Mammary epithelial cell (primary cell): ENCODE measurements at regions of chr4 and their contacts with region 1.

Region 1: DNA sequence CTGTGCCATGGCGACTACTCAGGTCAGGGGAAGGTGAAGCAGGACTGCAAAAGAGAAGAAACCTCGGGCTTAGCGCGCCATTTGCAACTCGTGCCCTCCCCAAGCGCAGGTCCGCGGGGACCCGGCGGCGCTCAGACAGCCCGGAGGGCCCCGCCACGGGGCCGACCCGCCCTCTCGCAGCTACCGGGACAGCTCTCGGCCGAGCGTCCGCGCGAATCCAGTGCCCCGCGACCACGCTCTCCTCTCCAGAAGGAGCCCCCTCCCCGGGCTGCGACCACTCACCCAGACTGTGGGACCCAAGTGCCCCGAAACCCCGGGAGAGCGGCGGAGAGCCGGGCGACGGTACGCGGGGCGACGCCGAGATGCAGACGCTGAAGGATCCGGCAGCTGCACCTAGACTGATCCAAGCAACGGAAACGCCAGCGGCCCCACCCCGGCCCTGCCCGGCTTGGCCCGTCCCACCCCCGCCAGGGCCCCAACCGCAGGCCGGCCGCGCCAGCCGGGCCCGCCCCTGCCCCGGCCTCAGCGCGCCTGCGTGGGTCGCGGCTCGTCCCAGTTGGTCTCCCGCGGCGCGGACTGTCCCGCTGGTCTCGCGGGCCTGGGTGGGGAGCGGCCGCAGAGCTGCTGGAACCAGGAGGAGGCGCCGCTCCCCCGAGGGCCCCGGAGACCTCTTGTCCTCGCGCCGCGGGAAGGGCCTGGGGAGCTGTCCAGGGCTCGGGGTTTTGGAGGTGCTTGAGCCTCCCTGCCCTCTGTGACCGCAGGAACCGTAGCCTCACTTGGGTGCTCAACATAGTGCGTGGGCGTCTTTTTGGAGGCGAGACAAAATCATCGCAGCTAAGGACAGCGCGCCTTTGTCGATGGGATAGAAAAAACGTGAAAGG is at the start of gene ANXA5:
- DNase-seq: peak; percentile 86
- H3K4me3 ChIP-seq: peak within 1 kb of the TSS; percentile 81 to 98 (median 93)
- H3K27ac ChIP-seq: peak within 1 kb of the TSS; percentile 96
- H3K4me1 ChIP-seq: peaks cover 35% of the 10 kb centered on the region
- H3K27me3 ChIP-seq: no peaks in the 10 kb centered on the region
- CTCF ChIP-seq: peak; percentile 5 to 44
- total RNA-seq, gene ANXA5: 335 to 396 TPM

Region 2: DNA sequence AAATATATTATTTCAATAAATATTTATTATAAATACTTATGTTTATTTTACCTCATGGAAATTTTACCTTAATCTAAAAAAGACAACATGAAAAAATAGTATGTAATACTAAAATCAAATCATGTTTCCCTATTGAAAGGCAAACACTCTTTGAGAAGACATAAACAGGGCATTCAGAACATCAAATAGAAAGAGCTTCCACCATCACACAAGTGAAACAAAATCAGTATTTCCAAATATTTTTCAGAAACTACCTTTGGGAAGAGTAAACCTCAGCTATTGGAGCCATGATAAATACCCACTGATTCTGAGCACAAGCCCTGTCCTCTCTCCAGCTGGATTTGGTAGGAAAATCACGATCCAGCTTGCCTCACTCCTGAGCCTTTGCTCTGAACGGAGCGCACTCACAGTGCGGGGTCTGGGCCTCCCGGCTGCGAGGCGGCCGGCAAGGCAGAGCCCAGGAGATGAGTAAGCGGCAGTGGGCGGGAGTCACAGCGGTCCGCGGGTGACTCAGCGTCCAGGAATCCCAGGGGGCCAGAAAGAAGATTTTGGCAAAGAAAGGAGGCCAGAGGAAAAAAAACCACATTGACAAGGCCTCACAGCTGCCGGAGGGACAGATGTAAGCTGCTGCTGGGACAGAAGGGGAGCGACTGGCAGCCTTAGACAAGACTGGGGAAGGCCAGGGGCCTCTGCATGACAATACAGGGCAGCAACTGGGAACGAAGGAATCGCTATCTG is 14.6 kb after region 1 on chr4:
- CTCF ChIA-PET with region 1: no interaction called
- dilution Hi-C with region 1: no loop called
- in situ Hi-C with region 1: no loop called
- intact Hi-C with region 1: loop called (anchors 1 kb)
- DNase-seq: peak; percentile 87
- H3K4me3 ChIP-seq: peak overlapping the region; percentile 19 to 48 (median 40)
- H3K27ac ChIP-seq: peak overlapping the region; percentile 84
- H3K4me1 ChIP-seq: peaks cover 25% of the 10 kb centered on the region
- H3K27me3 ChIP-seq: no peaks in the 10 kb centered on the region
- CTCF ChIP-seq: no peak

Region 3: GRCh38 chr4:121736735-121737351 is 40.0 kb after region 1 on chr4:
- CTCF ChIA-PET with region 1: no interaction called
- dilution Hi-C with region 1: no loop called
- in situ Hi-C with region 1: no loop called
- intact Hi-C with region 1: loop called (anchors 2 kb)
- DNase-seq: peak; percentile 47
- H3K4me3 ChIP-seq: no peak overlapping the region
- H3K27ac ChIP-seq: no peak overlapping the region
- H3K4me1 ChIP-seq: no peaks in the 10 kb centered on the region
- H3K27me3 ChIP-seq: no peaks in the 10 kb centered on the region
- CTCF ChIP-seq: peak; percentile 59 to 67

Region 4: GRCh38 chr4:121950212-121950679 is 253.4 kb after region 1 on chr4:
- CTCF ChIA-PET with region 1: no interaction called
- dilution Hi-C with region 1: no loop called
- in situ Hi-C with region 1: no loop called
- intact Hi-C with region 1: no loop called
- DNase-seq: peak; percentile 16
- H3K4me3 ChIP-seq: peak overlapping the region; percentile 26 to 48 (median 36)
- H3K27ac ChIP-seq: no peak overlapping the region
- H3K4me1 ChIP-seq: peaks cover 18% of the 10 kb centered on the region
- H3K27me3 ChIP-seq: peaks cover 33% of the 10 kb centered on the region
- CTCF ChIP-seq: peak; percentile 22 to 55